K562 (cell line): ENCODE measurements at regions of chr7 and their contacts with region 1.

Region 1: DNA sequence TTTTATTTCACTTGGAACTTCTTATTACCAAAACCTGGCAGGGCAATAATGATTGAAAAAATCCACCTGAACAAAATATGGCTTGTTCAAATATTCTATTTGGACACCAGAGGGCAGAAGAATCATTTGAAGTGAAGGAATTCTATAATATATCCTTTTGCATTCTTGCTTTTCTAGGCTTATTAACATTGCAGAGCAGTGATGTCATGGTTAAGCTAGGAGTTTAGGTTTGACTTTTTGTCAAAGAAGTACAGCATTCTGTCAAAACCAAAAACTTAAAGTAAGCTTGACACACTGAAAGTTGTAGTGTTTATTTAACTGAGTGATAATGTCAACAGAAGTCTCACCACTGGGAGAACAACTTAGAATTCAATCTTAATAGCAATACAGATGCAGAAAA is 156.0 kb downstream of the SEMA3D start:
- DNase-seq: peak; percentile 11 to 20 (median 20)
- ATAC-seq: peak; percentile 63; the same call in 2 of the 3 replicates
- H3K4me3 ChIP-seq: no peak overlapping the region
- H3K27ac ChIP-seq: no peak overlapping the region
- H3K4me1 ChIP-seq: no peaks in the 10 kb centered on the region
- H3K27me3 ChIP-seq: no peaks in the 10 kb centered on the region
- CTCF ChIP-seq: peak in 2 of 3 experiments; percentile 19 to 59; a peak in 4 of 6 replicates
- EP300 ChIP-seq: no peak
- POLR2A ChIP-seq: no peak
- RAD21 ChIP-seq: peak; percentile 59 to 74

Region 2: GRCh38 chr7:84879570-84880325 is 151.1 kb before region 1 on chr7:
- CTCF ChIA-PET with region 1: no interaction called
- POLR2A ChIA-PET with region 1: no interaction called
- in situ Hi-C with region 1: no loop called
- intact Hi-C with region 1: no loop called
- DNase-seq: peak in 1 of 4 experiments; percentile 23
- ATAC-seq: peak; percentile 44
- H3K4me3 ChIP-seq: peak overlapping the region; percentile 77
- H3K27ac ChIP-seq: peak overlapping the region; percentile 85
- H3K4me1 ChIP-seq: peaks cover 2 to 8% of the 10 kb centered on the region in 2 experiments; a peak in 2 of 5 replicates
- H3K27me3 ChIP-seq: no peaks in the 10 kb centered on the region
- CTCF ChIP-seq: no peak
- EP300 ChIP-seq: no peak
- POLR2A ChIP-seq: no peak
- RAD21 ChIP-seq: 0 out of 4 replicates have a peak, but pooled peaks of 1 of the 2 experiments have one; percentile 2

Region 3: DNA sequence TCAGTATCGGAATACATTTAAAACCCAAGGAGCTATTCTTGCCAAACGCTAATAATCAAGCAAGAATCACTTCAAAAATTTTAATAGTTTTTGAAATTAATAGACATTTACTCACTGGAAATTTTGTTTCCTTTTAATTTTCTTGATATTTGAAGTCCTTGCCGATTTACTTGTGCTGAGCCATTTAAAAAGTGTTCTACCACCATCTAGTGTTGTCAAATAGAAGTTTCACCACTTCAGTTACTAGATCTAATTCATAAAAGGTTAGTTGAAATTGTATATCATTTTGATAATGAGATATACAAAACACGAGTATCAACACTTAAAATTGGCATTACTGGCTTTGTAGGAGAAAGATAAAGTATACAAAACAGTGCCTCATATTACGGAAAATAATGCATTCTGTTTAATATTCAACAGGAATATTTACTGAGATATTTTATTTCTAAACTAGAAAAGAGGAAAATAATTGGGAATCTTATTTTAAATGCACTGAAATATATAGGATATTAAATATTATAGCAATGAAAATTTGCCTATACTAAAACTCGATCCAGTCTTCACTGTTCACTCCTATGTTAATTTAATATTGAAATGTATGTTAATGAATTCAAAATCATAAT is 820.8 kb after region 1 on chr7:
- CTCF ChIA-PET with region 1: no interaction called
- POLR2A ChIA-PET with region 1: no interaction called
- in situ Hi-C with region 1: no loop called
- intact Hi-C with region 1: loop called (anchors 2 kb)
- DNase-seq: peak in 1 of 4 experiments; percentile 12
- ATAC-seq: no peak
- H3K4me3 ChIP-seq: no peak overlapping the region
- H3K27ac ChIP-seq: no peak overlapping the region
- H3K4me1 ChIP-seq: no peaks in the 10 kb centered on the region
- H3K27me3 ChIP-seq: no peaks in the 10 kb centered on the region
- CTCF ChIP-seq: peak in 1 of 3 experiments; percentile 34; a peak in 1 of 6 replicates
- EP300 ChIP-seq: no peak
- POLR2A ChIP-seq: no peak
- RAD21 ChIP-seq: peak; percentile 29 to 45; a peak in 3 of 4 replicates

Region 4: GRCh38 chr7:86469680-86470295 is 1438.9 kb after region 1 on chr7:
- CTCF ChIA-PET with region 1: interaction called, 3 read pairs
- POLR2A ChIA-PET with region 1: no interaction called
- in situ Hi-C with region 1: loop called (anchors 25 kb)
- intact Hi-C with region 1: loop called (anchors 1 kb)
- DNase-seq: peak; percentile 50 to 77 (median 58)
- ATAC-seq: peak; percentile 91
- H3K4me3 ChIP-seq: no peak overlapping the region
- H3K27ac ChIP-seq: no peak overlapping the region
- H3K4me1 ChIP-seq: no peaks in the 10 kb centered on the region
- H3K27me3 ChIP-seq: no peaks in the 10 kb centered on the region
- CTCF ChIP-seq: peak; percentile 56 to 81 (median 71)
- EP300 ChIP-seq: no peak
- POLR2A ChIP-seq: no peak
- RAD21 ChIP-seq: peak; percentile 83 to 85

Region 5: DNA sequence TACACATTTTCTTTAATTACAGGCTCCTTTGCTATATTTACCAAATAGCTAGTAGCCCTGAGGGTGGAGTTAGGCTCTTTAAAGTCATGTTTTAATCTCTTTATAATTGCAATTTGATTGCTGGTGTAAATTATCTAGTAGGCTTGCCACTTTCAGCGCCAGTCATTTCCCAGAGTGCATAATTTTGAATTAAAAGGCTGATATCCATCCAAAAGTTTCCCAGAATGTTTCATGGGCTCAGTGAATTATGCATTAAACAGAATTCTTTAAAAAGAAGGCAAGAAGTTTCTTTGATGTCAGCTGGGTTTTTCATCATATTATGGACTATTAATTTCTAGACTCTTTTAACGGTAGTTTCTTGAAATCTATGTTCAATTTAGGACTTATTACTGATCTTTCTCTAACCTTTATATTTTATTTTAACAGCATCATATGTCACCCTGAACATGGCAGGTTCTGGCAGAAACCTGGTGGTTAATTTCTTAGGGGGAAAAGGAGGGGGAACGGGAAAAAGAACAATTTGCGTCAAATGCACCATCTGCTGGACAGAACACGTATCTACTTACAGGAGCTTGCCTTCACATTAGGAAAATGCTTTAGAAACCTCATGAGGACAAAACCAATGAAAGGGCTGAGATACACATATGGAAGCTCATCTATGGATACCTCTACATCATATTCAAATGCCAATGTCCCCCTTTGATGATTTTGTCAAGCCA is 1783.9 kb after region 1 on chr7:
- CTCF ChIA-PET with region 1: no interaction called
- POLR2A ChIA-PET with region 1: no interaction called
- in situ Hi-C with region 1: no loop called
- intact Hi-C with region 1: loop called (anchors 10 kb)
- DNase-seq: peak; percentile 27 to 38 (median 34)
- ATAC-seq: peak; percentile 79
- H3K4me3 ChIP-seq: no peak overlapping the region
- H3K27ac ChIP-seq: no peak overlapping the region
- H3K4me1 ChIP-seq: no peaks in the 10 kb centered on the region
- H3K27me3 ChIP-seq: no peaks in the 10 kb centered on the region
- CTCF ChIP-seq: peak; percentile 56 to 60 (median 58); a peak in 5 of 6 replicates
- EP300 ChIP-seq: no peak
- POLR2A ChIP-seq: no peak
- RAD21 ChIP-seq: peak; percentile 30 to 68; a peak in 3 of 4 replicates